ENCODE measurements at regions of chr3 and their contacts with region 1.

Region 1: GRCh38 chr3:129934234-129935123 is 40.0 kb upstream of the TRH start:
- DNase-seq: peak; percentile 32
- H3K4me3 ChIP-seq: no peak overlapping the region
- H3K27ac ChIP-seq: no peak overlapping the region
- H3K4me1 ChIP-seq: no peaks in the 10 kb centered on the region
- H3K27me3 ChIP-seq: no peaks in the 10 kb centered on the region
- CTCF ChIP-seq: peak; percentile 80

Region 2: DNA sequence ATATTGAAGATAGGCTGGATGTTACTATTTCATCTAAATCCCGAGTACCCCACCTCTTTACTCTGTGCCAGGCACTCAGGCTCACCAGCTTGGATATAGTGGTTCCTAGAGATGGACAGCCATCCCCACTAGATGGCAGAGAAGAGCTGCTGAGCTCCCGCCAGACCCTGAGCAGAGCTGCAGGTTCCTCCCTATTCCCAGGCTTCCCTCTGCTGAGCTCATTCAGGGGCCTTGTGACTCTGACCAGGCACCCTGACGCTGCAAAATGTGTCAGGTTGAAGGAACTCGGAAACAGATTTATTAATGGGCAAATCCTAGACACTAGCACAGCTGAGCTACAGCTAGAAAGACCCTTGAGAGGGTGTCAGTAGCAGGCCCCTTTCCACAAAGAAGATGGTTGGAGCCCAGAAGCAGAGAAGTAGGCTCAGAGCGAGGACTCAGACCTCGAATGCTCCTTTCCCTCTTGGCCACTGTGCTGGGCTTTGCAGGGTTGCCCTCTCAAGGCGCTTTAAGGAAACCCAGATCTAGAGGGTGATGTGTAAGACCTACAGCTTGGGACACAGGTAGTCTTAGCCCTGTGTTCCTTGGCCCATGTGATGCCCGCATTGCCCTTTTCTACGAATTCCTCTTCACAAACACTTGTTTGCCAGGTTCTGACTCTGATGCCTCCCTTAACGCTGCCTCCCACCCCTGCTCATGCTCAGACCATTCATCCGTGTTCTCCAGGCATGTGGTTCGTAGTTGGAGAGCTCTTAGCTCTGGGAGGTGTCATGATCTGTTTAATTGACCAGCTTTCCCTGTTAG is 444.0 kb before region 1 on chr3:
- intact Hi-C with region 1: loop called (anchors 5 kb)
- DNase-seq: peak; percentile 77
- H3K4me3 ChIP-seq: no peak overlapping the region
- H3K27ac ChIP-seq: no peak overlapping the region
- H3K4me1 ChIP-seq: no peaks in the 10 kb centered on the region
- H3K27me3 ChIP-seq: no peaks in the 10 kb centered on the region
- CTCF ChIP-seq: peak; percentile 72

Region 3: DNA sequence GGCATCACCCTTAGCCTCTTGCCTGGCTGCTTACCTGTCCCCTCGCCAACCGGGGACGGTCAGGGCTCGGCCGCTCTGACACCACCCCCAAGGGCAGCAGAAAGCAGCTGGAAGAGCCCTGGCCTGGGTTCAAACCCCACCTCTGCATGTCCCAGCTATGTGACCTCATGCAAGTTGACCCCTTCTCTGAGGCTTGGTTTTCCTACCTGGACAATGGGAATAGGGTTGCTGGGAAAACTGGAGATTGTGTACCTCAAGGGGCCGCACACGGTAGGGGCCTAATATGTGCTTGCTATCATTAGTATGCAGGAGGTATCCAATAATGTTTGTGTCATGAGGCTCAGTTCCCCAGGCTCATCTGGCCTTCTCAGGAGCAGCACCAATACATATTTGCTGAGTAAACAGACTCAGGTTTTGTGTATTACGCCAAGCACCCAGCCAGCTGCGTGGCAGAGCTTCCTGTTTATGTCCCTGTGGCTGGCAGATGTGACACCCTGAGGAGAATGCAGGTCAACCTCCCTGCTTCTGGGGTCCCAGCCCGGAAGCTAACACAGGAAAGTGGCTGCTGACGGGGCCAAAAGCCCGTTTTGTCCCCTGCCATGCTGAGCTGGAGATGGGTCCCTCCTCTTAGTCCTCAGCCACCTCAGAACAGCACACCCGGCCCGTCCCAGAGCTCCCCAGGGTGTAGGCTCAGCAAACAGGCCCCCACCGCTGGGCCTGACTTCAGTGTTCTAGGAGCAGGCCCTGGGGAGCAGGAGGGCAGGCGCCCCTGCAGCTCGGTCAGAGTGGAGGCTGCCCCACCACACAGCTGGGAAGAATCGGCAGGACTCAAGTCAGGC is 357.7 kb before region 1 on chr3:
- intact Hi-C with region 1: no loop called
- DNase-seq: peak; percentile 65
- H3K4me3 ChIP-seq: no peak overlapping the region
- H3K27ac ChIP-seq: peak overlapping the region; percentile 53
- H3K4me1 ChIP-seq: peaks cover 5% of the 10 kb centered on the region
- H3K27me3 ChIP-seq: no peaks in the 10 kb centered on the region
- CTCF ChIP-seq: no peak

Region 4: DNA sequence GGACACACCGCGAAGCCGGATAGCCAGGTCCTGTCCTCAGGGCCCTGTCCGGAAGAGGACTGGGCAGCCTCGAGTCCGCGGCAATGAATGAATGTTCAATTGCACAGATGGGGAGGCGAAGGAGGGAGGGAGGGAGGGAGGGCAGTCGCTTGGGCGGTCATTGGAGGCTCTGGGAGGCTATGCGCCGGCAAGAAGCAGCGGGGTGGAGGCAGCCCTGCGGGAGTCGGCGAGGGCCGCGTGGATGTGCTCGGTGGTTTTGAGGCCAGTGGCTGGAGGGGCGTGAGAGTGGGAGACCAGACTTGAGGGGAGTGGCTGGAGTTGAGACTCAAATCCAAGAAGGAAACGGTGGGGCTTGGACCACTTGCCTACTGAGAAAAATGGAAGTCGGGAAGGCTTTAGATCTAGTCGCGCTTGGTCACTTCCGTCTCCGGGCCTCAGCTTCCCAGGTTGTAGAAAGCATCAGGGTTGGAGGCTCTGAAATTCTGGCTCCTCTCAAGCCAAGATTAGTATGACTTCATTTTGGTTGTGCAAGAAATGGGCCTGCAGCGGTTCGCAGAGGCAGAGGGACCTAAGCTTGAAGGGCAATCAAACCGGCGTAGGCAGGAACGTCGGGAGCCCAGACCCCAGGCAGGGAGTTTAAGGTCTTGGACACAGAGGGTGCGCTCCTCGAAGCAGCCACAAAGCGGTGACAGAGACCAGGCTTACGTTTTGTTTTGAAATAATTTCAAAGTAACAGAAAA is 306.9 kb before region 1 on chr3:
- intact Hi-C with region 1: loop called (anchors 2 kb)
- DNase-seq: peak; percentile 76
- H3K4me3 ChIP-seq: peak overlapping the region; percentile 50
- H3K27ac ChIP-seq: peak overlapping the region; percentile 99
- H3K4me1 ChIP-seq: peaks cover 20% of the 10 kb centered on the region
- H3K27me3 ChIP-seq: no peaks in the 10 kb centered on the region
- CTCF ChIP-seq: peak; percentile 64

Region 5: DNA sequence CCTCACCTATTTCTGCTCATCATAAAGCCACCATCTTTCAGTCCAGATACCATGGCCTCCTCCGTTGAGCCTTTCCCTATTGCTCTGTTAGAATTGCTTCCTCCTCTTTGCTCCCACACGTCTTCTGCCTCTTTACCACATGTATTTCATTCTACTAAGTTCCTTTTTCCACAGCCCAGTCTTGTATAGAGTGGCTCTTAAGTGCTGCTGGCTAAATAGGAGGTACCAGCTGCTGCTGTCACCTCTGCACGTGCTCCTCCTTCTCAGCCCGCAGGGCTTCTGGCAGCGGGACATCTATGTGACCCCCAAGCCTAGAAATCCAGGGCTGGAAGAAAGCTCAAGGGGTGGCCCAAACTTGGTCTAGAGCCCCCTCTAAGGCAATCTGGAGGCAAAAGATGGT is 289.2 kb before region 1 on chr3:
- intact Hi-C with region 1: loop called (anchors 5 kb)
- DNase-seq: no peak
- H3K4me3 ChIP-seq: no peak overlapping the region
- H3K27ac ChIP-seq: no peak overlapping the region
- H3K4me1 ChIP-seq: no peaks in the 10 kb centered on the region
- H3K27me3 ChIP-seq: no peaks in the 10 kb centered on the region
- CTCF ChIP-seq: no peak

Region 6: GRCh38 chr3:129824926-129825541 is 109.4 kb before region 1 on chr3:
- intact Hi-C with region 1: loop called (anchors 5 kb)
- DNase-seq: peak; percentile 62
- H3K4me3 ChIP-seq: no peak overlapping the region
- H3K27ac ChIP-seq: no peak overlapping the region
- H3K4me1 ChIP-seq: no peaks in the 10 kb centered on the region
- H3K27me3 ChIP-seq: no peaks in the 10 kb centered on the region
- CTCF ChIP-seq: peak; percentile 62